Sciatic nerve (tissue), 2 donors: ENCODE measurements at regions of chr3 and their contacts with region 1.

Region 1: DNA sequence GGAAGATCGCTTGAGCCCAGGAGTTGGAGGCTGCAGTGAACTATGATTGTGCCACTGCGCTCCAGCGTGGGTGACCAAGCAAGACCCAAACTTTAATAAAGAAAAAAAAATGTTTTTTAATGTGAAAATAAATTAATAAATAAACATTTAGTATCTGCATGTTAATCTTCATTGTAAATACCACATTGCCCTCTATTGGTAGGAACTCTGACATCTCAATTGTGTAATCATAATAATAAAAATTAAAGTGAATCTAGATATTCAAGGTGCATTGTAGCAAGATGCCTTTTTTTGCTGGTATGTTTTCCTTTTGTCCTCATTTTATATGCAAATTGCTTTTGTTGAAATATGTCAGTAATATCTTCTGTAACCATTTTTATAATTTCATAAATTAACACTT is 95.0 kb upstream of the LIMD1 start:
- DNase-seq: no peak
- ATAC-seq: peak; percentile 74

Region 2: DNA sequence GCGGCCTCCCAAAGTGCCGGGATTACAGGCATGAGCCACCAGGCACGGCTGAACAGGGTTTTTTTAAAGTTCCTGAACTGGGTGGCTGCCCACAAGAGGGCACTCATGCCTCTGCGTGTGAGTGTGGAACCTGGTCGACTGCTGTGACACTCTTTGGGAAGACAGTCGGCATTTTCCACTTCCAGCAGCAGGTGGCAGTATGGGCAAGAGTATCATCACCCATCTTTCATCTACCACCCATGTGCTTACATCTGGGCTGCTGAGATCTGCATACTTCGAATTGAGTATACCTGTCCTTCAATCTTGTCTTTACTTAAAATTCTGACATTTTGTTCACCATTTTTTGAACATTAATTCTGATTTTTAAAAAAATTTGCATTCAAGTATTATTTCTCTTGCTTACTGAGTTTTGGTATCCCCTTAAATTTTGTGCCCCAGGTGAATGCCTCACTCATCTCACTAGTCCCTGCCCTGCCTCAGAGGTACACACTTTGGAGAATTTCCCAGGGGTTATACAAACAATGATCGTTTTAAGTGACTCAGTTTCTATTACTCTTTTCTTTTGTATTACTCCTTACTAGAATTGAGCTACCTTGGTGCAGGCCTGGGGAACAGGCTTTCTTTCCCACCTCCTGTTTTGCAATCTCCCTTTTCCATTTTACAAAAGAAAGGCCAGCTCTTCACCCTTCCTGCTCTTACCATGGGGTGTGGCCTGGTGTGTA is 461.6 kb before region 1 on chr3:
- intact Hi-C with region 1: loop called (anchors 5 kb)
- DNase-seq: peak; percentile 94
- ATAC-seq: peak; percentile 74

Region 3: DNA sequence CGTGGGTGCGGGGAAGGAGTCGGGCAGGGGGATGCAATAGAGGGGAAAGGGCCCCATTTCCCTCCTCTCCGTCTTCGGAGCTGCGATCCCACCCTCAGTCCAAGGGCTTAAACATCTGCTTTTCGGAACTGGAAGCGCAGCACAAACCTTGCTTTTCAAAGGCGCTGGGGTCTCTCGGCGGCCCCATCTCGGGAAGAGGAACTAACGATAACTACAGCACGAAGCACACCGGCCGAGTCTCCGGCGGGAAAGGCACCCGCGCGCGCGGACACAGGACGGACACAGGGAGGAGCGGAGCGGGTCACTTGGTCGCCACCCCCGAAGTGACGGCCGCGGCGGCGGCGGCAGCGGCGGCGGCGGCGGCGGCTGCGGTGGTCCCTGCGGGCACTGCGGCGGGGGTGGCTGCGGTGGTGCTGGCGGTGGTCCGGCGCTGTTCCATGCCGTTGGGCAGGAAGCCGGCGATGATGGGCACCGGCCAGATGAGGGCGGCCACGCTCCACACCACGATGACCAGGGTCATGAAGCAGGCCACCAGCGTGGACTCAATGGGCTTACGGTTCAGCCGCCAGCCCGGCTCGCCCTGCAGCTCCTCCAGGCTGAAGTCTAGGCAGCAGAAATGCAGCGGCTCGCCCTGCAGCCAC is 274.6 kb before region 1 on chr3:
- intact Hi-C with region 1: loop called (anchors 10 kb)
- DNase-seq: peak; percentile 85
- ATAC-seq: peak; percentile 89

Region 4: GRCh38 chr3:45455040-45455439 is 44.5 kb before region 1 on chr3:
- intact Hi-C with region 1: no loop called
- DNase-seq: no peak
- ATAC-seq: no peak

Region 5: DNA sequence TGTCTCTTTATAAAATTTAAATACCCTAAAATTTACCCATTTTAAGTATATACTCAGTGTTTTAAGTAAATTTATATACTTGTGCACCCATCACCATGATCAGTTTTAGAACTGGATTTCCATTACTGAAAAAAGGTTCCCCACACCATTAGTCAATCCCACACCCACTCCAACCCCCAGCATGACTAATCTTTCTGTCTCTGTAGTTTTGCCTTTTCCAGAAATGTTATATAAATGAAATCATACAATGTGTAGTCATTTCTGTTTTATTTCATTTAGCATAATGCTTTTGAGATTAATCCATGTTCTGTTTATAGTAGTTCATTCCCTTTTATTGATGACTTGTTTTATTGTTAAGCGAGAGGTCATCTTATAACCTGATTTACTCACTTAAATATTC is 28.9 kb after region 1 on chr3:
- intact Hi-C with region 1: no loop called
- DNase-seq: no peak
- ATAC-seq: no peak